ENCODE measurements at regions of chr17 and their contacts with region 1.

Region 1: DNA sequence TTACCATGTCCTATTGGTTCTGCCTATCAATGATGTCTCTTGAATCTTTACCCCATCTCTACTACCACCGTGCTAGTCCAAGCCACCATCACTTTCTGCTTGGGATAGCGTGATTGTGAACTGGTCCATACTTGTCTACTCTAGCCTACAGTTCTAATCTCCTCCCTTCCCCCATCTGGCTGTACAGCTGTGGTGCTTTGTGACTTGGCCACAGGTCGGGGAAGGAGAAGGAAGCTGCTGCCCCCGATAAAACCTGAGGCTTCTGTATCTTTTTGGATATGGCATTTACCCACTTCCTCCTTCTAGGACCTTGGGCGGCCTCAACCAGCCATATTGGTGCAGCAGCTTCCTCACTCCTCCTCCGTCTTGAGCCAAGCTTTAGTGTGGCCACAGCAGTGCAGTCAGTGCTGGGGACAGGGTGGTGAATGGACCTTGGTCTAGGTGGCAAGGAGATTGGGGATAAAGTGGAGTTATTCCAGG is 314 bp upstream of the ITGA2B start:
- DNase-seq: no peak
- H3K4me3 ChIP-seq: no peak overlapping the region
- H3K27ac ChIP-seq: no peak overlapping the region
- H3K4me1 ChIP-seq: no peaks in the 10 kb centered on the region
- H3K27me3 ChIP-seq: no peaks in the 10 kb centered on the region
- CTCF ChIP-seq: no peak
- POLR2A ChIP-seq: no peak

Region 2: DNA sequence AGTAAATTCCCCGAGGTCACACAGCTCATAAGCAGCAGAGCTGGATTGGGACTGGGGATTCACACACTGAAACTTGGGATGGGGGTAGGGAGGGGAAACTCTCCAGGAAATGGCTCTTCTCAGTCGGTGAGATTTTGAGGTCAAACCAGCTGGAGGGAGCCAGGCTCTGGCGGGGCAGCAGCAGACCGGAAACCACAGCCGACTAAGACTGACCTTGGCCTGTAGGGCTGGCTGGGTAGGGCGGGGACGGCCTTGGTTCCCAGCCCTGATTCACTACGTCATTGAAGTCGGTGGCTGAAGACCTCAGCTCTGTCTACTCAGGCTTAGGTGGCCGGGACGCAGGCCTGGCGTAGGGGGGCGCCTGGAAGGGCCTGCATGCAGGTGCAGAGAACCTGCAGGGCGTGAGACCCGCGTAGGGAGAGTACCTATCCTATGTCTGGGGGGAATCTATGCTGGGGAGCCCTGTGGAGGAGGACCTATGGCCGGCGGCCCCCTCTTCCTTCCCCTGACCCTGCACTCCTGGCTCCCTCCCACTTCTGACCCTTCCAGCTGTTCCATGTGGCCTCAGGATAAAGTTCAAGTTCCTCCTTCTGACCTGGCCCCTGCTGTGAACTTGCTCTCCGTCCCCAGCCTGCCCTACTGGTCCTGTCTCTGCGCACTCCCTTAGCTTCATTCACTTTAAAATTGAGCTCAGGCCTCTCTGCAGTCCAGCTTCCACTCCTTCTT is 109.9 kb before region 1 on chr17:
- intact Hi-C with region 1: no loop called
- DNase-seq: peak; percentile 5
- H3K4me3 ChIP-seq: no peak overlapping the region
- H3K27ac ChIP-seq: no peak overlapping the region
- H3K4me1 ChIP-seq: no peaks in the 10 kb centered on the region
- H3K27me3 ChIP-seq: no peaks in the 10 kb centered on the region
- CTCF ChIP-seq: no peak
- POLR2A ChIP-seq: no peak

Region 3: DNA sequence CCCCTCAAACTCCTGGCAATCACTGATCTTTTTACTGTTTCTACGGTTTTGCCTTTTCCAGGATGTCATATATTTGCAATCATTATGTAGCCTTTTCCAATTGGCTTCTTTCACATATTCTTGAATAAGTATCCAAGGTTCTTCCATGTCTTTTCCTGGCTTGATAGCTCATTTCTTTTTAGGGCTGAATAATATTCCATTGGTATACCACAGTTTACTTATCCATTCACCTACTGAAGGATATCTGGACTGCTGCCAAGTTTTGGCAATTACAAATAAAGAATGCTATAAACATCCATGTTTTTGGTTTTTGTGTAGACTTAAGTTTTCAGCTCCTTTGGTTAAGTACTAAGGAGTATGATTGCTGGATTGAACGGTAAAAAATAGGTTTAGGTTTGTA is 97.4 kb after region 1 on chr17:
- intact Hi-C with region 1: no loop called
- DNase-seq: no peak
- H3K4me3 ChIP-seq: no peak overlapping the region
- H3K27ac ChIP-seq: no peak overlapping the region
- H3K4me1 ChIP-seq: no peaks in the 10 kb centered on the region
- H3K27me3 ChIP-seq: no peaks in the 10 kb centered on the region
- CTCF ChIP-seq: no peak
- POLR2A ChIP-seq: no peak

Region 4: GRCh38 chr17:44503147-44504029 is 113.6 kb after region 1 on chr17 and contains the start of gene GPATCH8:
- intact Hi-C with region 1: loop called (anchors 10 kb)
- DNase-seq: peak; percentile 82
- H3K4me3 ChIP-seq: peak within 1 kb of the TSS; percentile 64 to 77
- H3K27ac ChIP-seq: peak within 1 kb of the TSS; percentile 85 to 87
- H3K4me1 ChIP-seq: no peaks in the 10 kb centered on the region
- H3K27me3 ChIP-seq: no peaks in the 10 kb centered on the region
- CTCF ChIP-seq: peak in 1 of 4 experiments; percentile 28
- POLR2A ChIP-seq: peak; percentile 73
- total RNA-seq, gene GPATCH8: 25.2 to 42.8 TPM